ENCODE measurements at regions of chr14 and their contacts with region 1.

Region 1: DNA sequence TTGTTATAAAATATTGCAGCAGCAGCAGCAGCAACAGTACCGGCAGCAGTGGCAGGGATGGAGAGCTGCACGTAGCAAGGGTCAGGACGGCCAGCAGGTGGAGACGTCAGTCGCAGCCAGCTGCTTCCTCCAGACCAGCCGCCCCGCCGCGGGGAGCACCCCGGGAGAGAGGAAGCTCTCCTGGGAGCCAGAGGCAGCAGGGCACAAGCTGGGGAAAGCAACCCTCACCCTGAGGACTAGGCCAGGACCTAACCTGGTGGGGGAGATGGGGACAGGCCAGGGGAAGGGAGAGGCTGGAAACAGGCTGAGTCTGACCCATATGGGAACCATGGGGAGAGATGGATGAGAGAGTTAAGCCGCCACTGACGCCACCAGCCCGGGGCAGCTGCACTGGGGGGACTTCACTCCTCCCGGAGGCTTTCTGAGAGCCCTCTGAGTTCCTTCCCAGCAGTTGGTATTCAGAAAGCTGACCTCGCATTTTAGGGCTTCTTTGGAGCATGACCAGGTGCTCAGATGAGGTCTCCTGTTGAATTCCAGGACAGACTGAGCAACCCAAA is 56.3 kb downstream of the SPTB start:
- DNase-seq: peak; percentile 94
- H3K4me3 ChIP-seq: peak overlapping the region in 1 of 4 donors; percentile 30
- H3K27ac ChIP-seq: no peak overlapping the region
- H3K4me1 ChIP-seq: peaks cover 7 to 19% (median 9%) of the 10 kb centered on the region in 4 donors
- H3K27me3 ChIP-seq: peaks cover 0 to 10% (median 0%) of the 10 kb centered on the region in 4 donors
- CTCF ChIP-seq: peak; percentile 74 to 86 (median 78)
- EP300 ChIP-seq: no peak
- POLR2A ChIP-seq: no peak

Region 2: GRCh38 chr14:64891839-64892375 is 68.5 kb after region 1 on chr14:
- intact Hi-C with region 1: loop called (anchors 2 kb)
- DNase-seq: no peak
- H3K4me3 ChIP-seq: no peak overlapping the region
- H3K27ac ChIP-seq: no peak overlapping the region
- H3K4me1 ChIP-seq: no peaks in the 10 kb centered on the region
- H3K27me3 ChIP-seq: peaks cover 0 to 24% (median 0%) of the 10 kb centered on the region in 4 donors
- CTCF ChIP-seq: peak; percentile 43 to 56 (median 53)
- EP300 ChIP-seq: no peak
- POLR2A ChIP-seq: no peak

Region 3: DNA sequence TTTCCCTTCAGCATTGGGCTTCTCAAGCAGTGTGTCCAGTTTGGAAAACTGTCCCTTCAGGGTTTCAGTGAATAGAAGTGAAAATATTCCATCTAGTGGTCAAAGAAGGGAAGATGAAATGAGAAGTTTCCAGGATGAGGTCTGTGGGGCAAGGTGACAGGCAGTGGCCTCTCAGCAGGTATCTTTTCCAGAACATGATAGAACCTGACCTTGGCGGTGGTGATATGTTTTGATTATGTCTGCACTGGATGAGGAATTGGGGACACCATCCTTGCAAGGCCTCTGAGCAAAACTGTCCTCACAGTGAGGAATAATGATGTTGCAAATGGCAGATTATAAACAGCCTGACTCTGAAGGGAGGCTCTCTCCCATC is 114.4 kb after region 1 on chr14:
- intact Hi-C with region 1: loop called (anchors 5 kb)
- DNase-seq: peak; percentile 7
- H3K4me3 ChIP-seq: no peak overlapping the region
- H3K27ac ChIP-seq: peak overlapping the region in 1 of 4 donors; percentile 52
- H3K4me1 ChIP-seq: peaks cover 19 to 38% (median 36%) of the 10 kb centered on the region in 4 donors
- H3K27me3 ChIP-seq: no peaks in the 10 kb centered on the region
- CTCF ChIP-seq: peak; percentile 18 to 43 (median 23)
- EP300 ChIP-seq: no peak
- POLR2A ChIP-seq: no peak